ENCODE measurements at regions of chr12 and their contacts with region 1.

Region 1: GRCh38 chr12:101792051-101792931 is 38.5 kb downstream of the GNPTAB start:
- DNase-seq: peak; percentile 18
- H3K4me3 ChIP-seq: no peak overlapping the region
- H3K27ac ChIP-seq: no peak overlapping the region
- H3K4me1 ChIP-seq: no peaks in the 10 kb centered on the region
- H3K27me3 ChIP-seq: no peaks in the 10 kb centered on the region
- CTCF ChIP-seq: peak in 1 of 2 donors; percentile 33
- POLR2A ChIP-seq: no peak

Region 2: GRCh38 chr12:101823891-101824290 is 31.6 kb after region 1 on chr12:
- CTCF ChIA-PET with region 1: interaction called, 5 read pairs
- POLR2A ChIA-PET with region 1: no interaction called
- dilution Hi-C with region 1: no loop called
- intact Hi-C with region 1: loop called (anchors 1 kb)
- DNase-seq: peak; percentile 18
- H3K4me3 ChIP-seq: no peak overlapping the region
- H3K27ac ChIP-seq: no peak overlapping the region
- H3K4me1 ChIP-seq: peaks cover 5% of the 10 kb centered on the region
- H3K27me3 ChIP-seq: no peaks in the 10 kb centered on the region
- CTCF ChIP-seq: peak; percentile 10 to 13
- POLR2A ChIP-seq: no peak

Measured in endothelial cell of umbilical vein (primary cell).